Esophagus muscularis mucosa (tissue), 4 donors: ENCODE measurements at regions of chr5 and their contacts with region 1.

Region 1: DNA sequence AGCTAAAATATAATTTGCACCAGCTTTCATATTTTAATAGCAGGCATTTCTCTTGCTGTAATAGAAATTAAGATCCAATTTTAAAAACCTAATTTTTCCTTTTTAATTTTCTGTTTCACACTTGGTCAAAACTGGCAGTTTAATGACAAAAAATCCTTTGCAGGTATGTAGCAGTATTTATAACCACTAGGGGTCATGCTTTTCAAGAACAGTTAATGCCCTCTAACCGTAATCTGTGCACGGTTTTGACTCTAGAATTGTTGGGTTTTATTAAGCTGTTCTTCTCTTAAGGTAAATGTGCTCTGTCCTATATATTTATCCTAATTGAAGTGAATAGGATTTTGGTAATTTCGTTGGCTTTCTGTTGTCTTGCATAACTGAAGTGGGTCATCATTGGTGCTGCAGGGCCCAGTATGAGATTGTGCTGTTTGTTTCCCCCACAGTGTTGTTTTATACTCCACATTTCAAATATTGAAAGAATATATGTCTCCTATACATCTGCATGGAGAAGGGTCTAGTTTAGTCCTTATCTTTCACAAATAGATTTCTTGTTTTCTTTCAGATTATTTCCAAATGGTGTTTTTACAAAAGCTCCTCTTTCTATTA is 107.4 kb downstream of the SCAMP1 start:
- DNase-seq: no peak
- H3K4me3 ChIP-seq: no peak overlapping the region
- H3K27ac ChIP-seq: no peak overlapping the region
- H3K4me1 ChIP-seq: peaks cover 0 to 6% (median 3%) of the 10 kb centered on the region in 4 donors
- H3K27me3 ChIP-seq: no peaks in the 10 kb centered on the region
- CTCF ChIP-seq: peak; percentile 73 to 85 (median 83)
- EP300 ChIP-seq: no peak
- POLR2A ChIP-seq: no peak

Region 2: DNA sequence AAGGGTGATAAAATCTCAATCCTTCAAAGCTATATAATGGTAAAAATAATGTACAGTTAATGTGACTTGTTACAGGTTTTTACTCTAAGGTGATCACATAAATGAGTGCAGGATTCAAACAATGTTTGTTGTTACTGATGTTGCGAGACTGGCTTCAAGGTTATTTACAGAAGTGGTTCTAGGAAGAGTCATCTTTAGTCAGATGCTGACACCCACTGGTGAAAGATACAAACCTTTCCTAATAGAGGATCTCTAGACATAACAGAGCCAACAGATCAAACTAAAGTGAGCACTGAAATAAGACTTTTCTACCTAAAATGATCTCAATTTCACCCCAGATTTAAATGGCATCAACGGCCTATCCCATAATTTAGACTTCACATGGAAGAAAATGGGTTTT is 497.0 kb after region 1 on chr5:
- intact Hi-C with region 1: loop called (anchors 5 kb)
- DNase-seq: no peak
- H3K4me3 ChIP-seq: no peak overlapping the region
- H3K27ac ChIP-seq: no peak overlapping the region
- H3K4me1 ChIP-seq: no peaks in the 10 kb centered on the region
- H3K27me3 ChIP-seq: no peaks in the 10 kb centered on the region
- CTCF ChIP-seq: peak; percentile 26 to 40 (median 34)
- EP300 ChIP-seq: no peak
- POLR2A ChIP-seq: no peak